Left cardiac atrium (tissue), 4 donors: ENCODE measurements at regions of chr6 and their contacts with region 1.

Region 1: GRCh38 chr6:125986300-125987025 is at the start of gene TRMT11:
- DNase-seq: peak; percentile 91
- ATAC-seq: peak; percentile 99
- total RNA-seq, gene TRMT11: 7.9 to 14.8 TPM

Region 2: DNA sequence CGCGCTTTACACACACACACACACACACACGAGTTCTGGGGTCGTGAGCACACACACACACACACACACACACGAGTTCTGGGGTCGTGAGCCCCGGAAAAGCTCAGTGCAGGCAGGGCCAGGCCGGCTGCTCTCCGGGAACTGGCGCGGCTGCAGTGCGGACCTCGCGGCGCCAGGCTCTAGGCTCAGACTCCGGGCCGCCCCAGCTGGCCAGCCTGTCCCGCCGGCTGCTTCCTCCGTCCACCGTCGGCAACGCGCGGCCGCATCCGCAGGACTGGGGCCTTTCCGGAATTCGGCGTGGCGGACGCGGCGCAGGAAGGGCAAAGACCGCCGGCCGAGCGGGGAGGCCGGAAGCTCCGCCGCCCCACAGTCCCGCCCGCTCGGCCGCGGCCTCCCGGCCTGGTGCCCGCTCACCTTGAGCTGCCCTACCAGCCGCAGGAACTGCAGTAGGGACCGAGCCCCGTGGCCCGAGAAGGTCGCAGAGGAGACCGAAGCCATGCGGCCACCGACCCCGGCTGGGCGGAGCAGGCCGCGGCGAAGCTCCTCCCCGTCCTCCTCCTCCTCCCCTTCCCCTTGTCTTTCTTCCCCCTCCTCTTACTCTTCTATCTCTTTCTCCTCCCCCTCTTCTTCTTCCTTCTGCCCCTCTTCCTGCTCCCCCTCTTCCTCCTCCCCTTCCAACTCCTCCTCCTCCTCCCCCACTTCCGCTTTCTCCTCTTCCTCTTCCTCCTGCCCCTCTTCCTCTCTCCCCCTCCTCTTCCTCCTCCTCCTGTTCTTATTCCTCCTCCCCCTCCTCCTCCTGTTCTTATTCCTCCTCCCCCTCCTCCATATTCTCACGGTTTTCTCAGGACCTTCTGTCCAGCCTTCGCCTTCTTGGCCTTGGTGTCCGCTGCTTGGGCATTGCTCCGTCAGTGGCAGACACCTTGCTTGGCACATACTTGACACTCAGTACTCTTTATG is 684.8 kb before region 1 on chr6 and contains the start of gene HDDC2:
- intact Hi-C with region 1: loop called in 1 of 2 experiments (anchors 10 kb)
- DNase-seq: peak; percentile 86
- ATAC-seq: peak; percentile 94 to 95
- total RNA-seq, gene HDDC2: 78.1 to 80.3 TPM

Region 3: GRCh38 chr6:125714441-125715090 is 271.9 kb before region 1 on chr6:
- intact Hi-C with region 1: no loop called
- DNase-seq: no peak
- ATAC-seq: no peak